Endothelial cell of umbilical vein (primary cell): ENCODE measurements at regions of chr3 and their contacts with region 1.

Region 1: GRCh38 chr3:120558771-120559241 is 37.3 kb upstream of the NDUFB4 start:
- DNase-seq: peak; percentile 87
- H3K4me3 ChIP-seq: peak overlapping the region; percentile 39 to 85 (median 49)
- H3K27ac ChIP-seq: peak overlapping the region; percentile 96
- H3K4me1 ChIP-seq: peaks cover 26% of the 10 kb centered on the region
- H3K27me3 ChIP-seq: no peaks in the 10 kb centered on the region
- CTCF ChIP-seq: peak; percentile 94
- POLR2A ChIP-seq: no peak

Region 2: GRCh38 chr3:119891944-119892721 is 666.7 kb before region 1 on chr3:
- CTCF ChIA-PET with region 1: interaction called, 6 read pairs
- POLR2A ChIA-PET with region 1: no interaction called
- dilution Hi-C with region 1: no loop called
- intact Hi-C with region 1: loop called (anchors 1 kb)
- DNase-seq: peak; percentile 80
- H3K4me3 ChIP-seq: no peak overlapping the region
- H3K27ac ChIP-seq: no peak overlapping the region
- H3K4me1 ChIP-seq: peaks cover 4% of the 10 kb centered on the region
- H3K27me3 ChIP-seq: no peaks in the 10 kb centered on the region
- CTCF ChIP-seq: peak; percentile 45 to 66
- POLR2A ChIP-seq: no peak

Region 3: GRCh38 chr3:120348981-120349818 is 209.6 kb before region 1 on chr3 and contains the start of gene LRRC58:
- CTCF ChIA-PET with region 1: interaction called, 13 read pairs
- POLR2A ChIA-PET with region 1: no interaction called
- dilution Hi-C with region 1: no loop called
- intact Hi-C with region 1: loop called (anchors 1 kb)
- DNase-seq: peak; percentile 88
- H3K4me3 ChIP-seq: peak within 1 kb of the TSS; percentile 34 to 76 (median 59)
- H3K27ac ChIP-seq: peak within 1 kb of the TSS; percentile 67
- H3K4me1 ChIP-seq: peaks cover 14% of the 10 kb centered on the region
- H3K27me3 ChIP-seq: peaks cover 5% of the 10 kb centered on the region in 2 experiments
- CTCF ChIP-seq: peak; percentile 5 to 49
- POLR2A ChIP-seq: peak; percentile 81
- total RNA-seq, gene LRRC58: 11.9 and 12.3 TPM in 2 replicates

Region 4: GRCh38 chr3:120425572-120426250 is 133.1 kb before region 1 on chr3:
- CTCF ChIA-PET with region 1: interaction called, 246 read pairs
- POLR2A ChIA-PET with region 1: interaction called, 3 read pairs
- dilution Hi-C with region 1: no loop called
- intact Hi-C with region 1: no loop called
- DNase-seq: peak; percentile 78
- H3K4me3 ChIP-seq: no peak overlapping the region
- H3K27ac ChIP-seq: no peak overlapping the region
- H3K4me1 ChIP-seq: peaks cover 16% of the 10 kb centered on the region
- H3K27me3 ChIP-seq: no peaks in the 10 kb centered on the region
- CTCF ChIP-seq: no peak
- POLR2A ChIP-seq: no peak

Region 5: GRCh38 chr3:120477781-120478180 is 81.0 kb before region 1 on chr3:
- CTCF ChIA-PET with region 1: no interaction called
- POLR2A ChIA-PET with region 1: no interaction called
- dilution Hi-C with region 1: no loop called
- intact Hi-C with region 1: no loop called
- DNase-seq: no peak
- H3K4me3 ChIP-seq: no peak overlapping the region
- H3K27ac ChIP-seq: no peak overlapping the region
- H3K4me1 ChIP-seq: no peaks in the 10 kb centered on the region
- H3K27me3 ChIP-seq: no peaks in the 10 kb centered on the region
- CTCF ChIP-seq: no peak
- POLR2A ChIP-seq: no peak

Region 6: DNA sequence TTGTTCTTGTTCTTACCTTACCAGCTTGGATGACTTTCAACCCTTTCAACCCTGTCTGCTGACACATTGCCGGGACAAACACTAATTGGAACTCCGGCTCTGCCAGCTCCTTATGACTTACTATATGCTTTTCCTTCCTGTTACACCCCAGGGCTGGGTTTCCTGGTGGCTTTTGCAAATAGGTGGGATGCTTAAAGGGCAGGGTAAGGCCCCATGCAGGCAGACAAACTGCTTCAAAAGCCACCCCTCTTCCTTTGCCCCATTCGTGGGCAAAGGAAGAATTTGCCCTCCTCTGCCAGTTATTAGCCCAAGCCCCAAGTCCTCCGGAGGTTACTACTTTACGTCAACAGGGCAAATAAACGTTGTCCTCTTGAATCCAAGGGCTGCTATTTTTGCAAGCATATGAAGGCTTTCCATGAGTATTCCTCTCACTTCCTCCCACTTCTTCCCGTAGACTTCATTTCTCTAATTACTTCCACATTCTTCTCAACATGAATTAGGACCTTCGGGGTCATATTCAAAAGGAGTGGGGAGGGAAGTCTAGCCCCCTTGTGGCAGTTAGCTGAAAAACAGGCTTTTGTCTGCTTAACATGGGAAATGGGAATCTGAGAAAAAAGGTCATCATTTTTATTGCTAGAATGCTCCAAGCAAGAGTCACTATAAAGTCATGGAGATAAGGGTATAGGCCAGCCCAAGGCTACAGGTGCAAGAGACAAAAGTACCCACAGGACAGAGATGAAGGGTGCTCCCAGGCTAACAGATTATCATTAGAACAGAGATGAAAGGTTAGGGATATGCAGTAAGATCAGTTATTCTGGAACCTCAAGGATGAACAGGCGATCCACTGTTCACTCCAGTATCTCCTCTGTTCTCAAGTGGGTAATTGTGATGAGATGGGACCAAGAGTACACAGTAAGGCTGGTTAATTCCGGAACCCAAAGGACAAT is 51.7 kb before region 1 on chr3:
- CTCF ChIA-PET with region 1: interaction called, 9 read pairs
- POLR2A ChIA-PET with region 1: no interaction called
- dilution Hi-C with region 1: no loop called
- intact Hi-C with region 1: loop called (anchors 1 kb)
- DNase-seq: peak; percentile 74
- H3K4me3 ChIP-seq: no peak overlapping the region
- H3K27ac ChIP-seq: peak overlapping the region; percentile 15
- H3K4me1 ChIP-seq: peaks cover 17% of the 10 kb centered on the region
- H3K27me3 ChIP-seq: no peaks in the 10 kb centered on the region
- CTCF ChIP-seq: peak; percentile 71 to 74
- POLR2A ChIP-seq: no peak

Region 7: GRCh38 chr3:120742198-120742849 is 183.5 kb after region 1 on chr3 and contains the starts of genes GTF2E1 and RABL3:
- CTCF ChIA-PET with region 1: interaction called, 5 read pairs
- POLR2A ChIA-PET with region 1: no interaction called
- dilution Hi-C with region 1: no loop called
- intact Hi-C with region 1: loop called (anchors 1 kb)
- DNase-seq: peak; percentile 100
- H3K4me3 ChIP-seq: peak within 1 kb of the TSS; percentile 67 to 96 (median 81)
- H3K27ac ChIP-seq: peak within 1 kb of the TSS; percentile 93
- H3K4me1 ChIP-seq: peaks cover 29% of the 10 kb centered on the region
- H3K27me3 ChIP-seq: no peaks in the 10 kb centered on the region
- CTCF ChIP-seq: no peak
- POLR2A ChIP-seq: peak; percentile 73
- total RNA-seq, gene GTF2E1: 25.5 and 27.7 TPM in 2 replicates
- total RNA-seq, gene RABL3: 24.9 and 25.9 TPM in 2 replicates

Region 8: GRCh38 chr3:121152573-121152972 is 593.8 kb after region 1 on chr3:
- CTCF ChIA-PET with region 1: interaction called, 3 read pairs
- POLR2A ChIA-PET with region 1: no interaction called
- dilution Hi-C with region 1: no loop called
- intact Hi-C with region 1: loop called (anchors 2 kb)
- DNase-seq: peak; percentile 23
- H3K4me3 ChIP-seq: no peak overlapping the region
- H3K27ac ChIP-seq: no peak overlapping the region
- H3K4me1 ChIP-seq: no peaks in the 10 kb centered on the region
- H3K27me3 ChIP-seq: no peaks in the 10 kb centered on the region
- CTCF ChIP-seq: no peak
- POLR2A ChIP-seq: no peak